Activated naive CD4-positive, alpha-beta T cell treated with anti-CD3 and anti-CD28 coated beads for 36 hours (primary cell): ENCODE measurements at regions of chr7 and their contacts with region 1.

Region 1: GRCh38 chr7:39686261-39686924 is 63.0 kb downstream of the RALA start:
- DNase-seq: no peak
- H3K4me3 Mint-ChIP-seq: no peak overlapping the region
- H3K27ac Mint-ChIP-seq: peak overlapping the region; percentile 69
- H3K4me1 Mint-ChIP-seq: peaks cover 65% of the 10 kb centered on the region
- H3K27me3 Mint-ChIP-seq: no peaks in the 10 kb centered on the region

Region 2: DNA sequence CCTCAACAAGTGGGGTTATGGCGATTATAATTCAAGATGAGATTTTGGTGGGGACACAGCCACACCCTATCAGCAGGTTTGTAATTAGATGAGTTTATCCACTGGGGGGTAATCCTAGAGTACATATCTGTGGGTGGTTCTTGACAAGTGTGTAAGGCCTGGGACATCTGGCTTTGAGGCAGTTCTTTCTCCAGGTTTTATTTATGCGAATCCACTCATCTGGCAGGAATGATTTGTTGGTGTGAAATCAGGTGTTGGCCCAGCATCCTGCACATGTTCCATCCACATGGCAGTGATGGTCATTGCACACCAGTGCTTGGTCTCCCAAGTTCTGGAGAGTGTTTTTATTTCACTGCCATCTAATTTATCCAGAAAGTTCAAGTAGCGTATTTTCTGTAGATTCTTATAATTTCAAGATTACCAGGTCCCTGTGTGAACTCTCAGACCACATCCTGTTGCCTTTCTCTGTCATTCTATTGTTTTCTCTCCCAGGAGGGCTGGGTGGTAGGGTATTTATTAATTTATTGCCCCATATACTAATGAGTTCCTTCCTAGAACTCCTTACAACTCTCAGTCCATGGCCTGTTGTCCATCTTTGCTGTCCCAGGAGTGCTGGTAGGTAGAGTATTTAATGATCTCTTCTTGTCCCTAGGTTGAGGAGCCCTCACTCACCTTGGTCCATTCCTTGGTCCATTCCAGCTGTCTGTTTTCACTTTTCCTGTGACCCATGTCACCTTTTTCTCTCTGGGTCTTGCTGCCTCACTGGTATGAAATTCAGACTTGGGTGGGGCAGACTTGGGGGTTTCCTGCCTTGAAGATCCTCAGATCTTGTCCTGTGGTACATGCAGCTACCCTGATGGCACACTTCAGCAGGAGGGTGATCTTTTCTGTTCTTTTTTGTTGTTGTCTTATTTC is 52.6 kb before region 1 on chr7:
- CTCF ChIA-PET with region 1: no interaction called
- intact Hi-C with region 1: loop called (anchors 1 kb)
- DNase-seq: peak; percentile 26
- H3K4me3 Mint-ChIP-seq: no peak overlapping the region
- H3K27ac Mint-ChIP-seq: peak overlapping the region; percentile 75
- H3K4me1 Mint-ChIP-seq: peaks cover 81% of the 10 kb centered on the region
- H3K27me3 Mint-ChIP-seq: no peaks in the 10 kb centered on the region

Region 3: DNA sequence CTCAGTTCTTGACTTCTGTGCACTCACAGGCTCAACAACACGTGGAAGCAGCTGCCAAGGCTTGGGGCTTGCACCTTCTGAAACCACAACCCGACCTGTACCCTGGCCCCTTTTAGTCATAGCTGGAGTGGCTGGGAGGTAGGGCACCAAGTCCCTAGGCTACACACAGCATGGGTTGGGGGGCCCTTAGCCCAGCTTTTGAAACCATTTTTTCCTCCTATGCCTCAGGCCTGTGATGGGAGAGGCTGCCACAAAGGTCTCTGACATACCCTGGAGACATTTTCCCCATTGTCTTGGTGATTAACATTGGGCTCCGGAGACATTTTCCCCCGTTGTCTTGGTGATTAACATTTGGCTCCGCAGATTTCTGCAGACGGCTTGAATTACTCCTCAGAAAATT is 24.4 kb before region 1 on chr7:
- CTCF ChIA-PET with region 1: no interaction called
- intact Hi-C with region 1: loop called (anchors 1 kb)
- DNase-seq: no peak
- H3K4me3 Mint-ChIP-seq: no peak overlapping the region
- H3K27ac Mint-ChIP-seq: no peak overlapping the region
- H3K4me1 Mint-ChIP-seq: peaks cover 34% of the 10 kb centered on the region
- H3K27me3 Mint-ChIP-seq: no peaks in the 10 kb centered on the region

Region 4: GRCh38 chr7:40134428-40135316 is 448.3 kb after region 1 on chr7 and contains the starts of genes MPLKIP and SUGCT:
- CTCF ChIA-PET with region 1: no interaction called
- intact Hi-C with region 1: loop called (anchors 1 kb)
- DNase-seq: peak; percentile 87
- H3K4me3 Mint-ChIP-seq: peak within 1 kb of the TSS; percentile 93
- H3K27ac Mint-ChIP-seq: peak within 1 kb of the TSS; percentile 96
- H3K4me1 Mint-ChIP-seq: peaks cover 26% of the 10 kb centered on the region
- H3K27me3 Mint-ChIP-seq: no peaks in the 10 kb centered on the region
- total RNA-seq, gene MPLKIP: 38.1 to 38.8 TPM
- total RNA-seq, gene SUGCT: 0.81 to 1.2 TPM